ENCODE measurements at regions of chr12 and their contacts with region 1.

Region 1: DNA sequence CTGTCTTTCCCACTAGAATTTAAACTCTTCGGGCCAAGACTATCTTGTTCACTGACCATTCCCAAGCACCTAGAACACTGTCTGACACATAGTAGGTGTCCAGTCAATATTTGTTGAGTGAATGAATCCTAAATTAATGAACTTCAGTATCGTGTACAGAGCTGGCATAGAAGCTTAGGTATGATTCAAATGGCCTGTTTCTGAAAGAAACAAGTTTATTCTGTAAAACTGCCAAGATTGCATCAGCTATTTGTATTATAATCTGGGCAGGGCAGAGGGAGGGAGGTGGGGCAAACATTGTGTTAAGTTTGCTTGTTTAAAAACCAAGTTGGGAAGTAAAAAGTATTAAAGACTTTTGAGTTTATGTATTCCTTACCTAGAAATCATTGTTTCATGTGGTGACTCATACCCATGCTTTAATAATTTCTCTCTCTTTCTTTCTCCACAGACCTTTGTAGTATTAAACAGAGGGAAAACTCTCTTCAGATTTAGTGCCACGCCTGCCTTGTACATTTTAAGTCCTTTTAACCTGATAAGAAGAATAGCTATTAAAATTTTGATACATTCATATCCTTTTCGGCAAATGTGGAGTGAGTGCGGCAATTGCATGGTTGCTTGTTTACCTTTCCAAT is 92.8 kb downstream of the SCN8A start:
- DNase-seq: no peak
- H3K4me3 ChIP-seq: no peak overlapping the region
- H3K27ac ChIP-seq: no peak overlapping the region
- H3K4me1 ChIP-seq: no peaks in the 10 kb centered on the region
- H3K27me3 ChIP-seq: no peaks in the 10 kb centered on the region
- CTCF ChIP-seq: no peak
- POLR2A ChIP-seq: no peak

Region 2: GRCh38 chr12:51871126-51871525 is 187.3 kb after region 1 on chr12:
- intact Hi-C with region 1: loop called (anchors 10 kb)
- DNase-seq: peak; percentile 41
- H3K4me3 ChIP-seq: no peak overlapping the region
- H3K27ac ChIP-seq: no peak overlapping the region
- H3K4me1 ChIP-seq: peaks cover 5% of the 10 kb centered on the region
- H3K27me3 ChIP-seq: no peaks in the 10 kb centered on the region
- CTCF ChIP-seq: no peak
- POLR2A ChIP-seq: no peak